MCF 10A (cell line): ENCODE measurements at regions of chr5 and their contacts with region 1.

Region 1: GRCh38 chr5:91419571-91420537 is 36.7 kb upstream of the ARRDC3 start:
- DNase-seq: peak; percentile 73
- H3K4me3 Mint-ChIP-seq: no peak overlapping the region
- H3K27ac Mint-ChIP-seq: no peak overlapping the region
- H3K4me1 Mint-ChIP-seq: no peaks in the 10 kb centered on the region
- H3K27me3 Mint-ChIP-seq: no peaks in the 10 kb centered on the region
- CTCF ChIP-seq: peak; percentile 75

Region 2: GRCh38 chr5:90709323-90710155 is 710.3 kb before region 1 on chr5:
- CTCF ChIA-PET with region 1: interaction called, 14 read pairs
- POLR2A ChIA-PET with region 1: no interaction called
- intact Hi-C with region 1: loop called (anchors 10 kb)
- DNase-seq: peak; percentile 57
- H3K4me3 Mint-ChIP-seq: no peak overlapping the region
- H3K27ac Mint-ChIP-seq: no peak overlapping the region
- H3K4me1 Mint-ChIP-seq: no peaks in the 10 kb centered on the region
- H3K27me3 Mint-ChIP-seq: peaks cover 81% of the 10 kb centered on the region
- CTCF ChIP-seq: peak; percentile 54

Region 3: GRCh38 chr5:90849939-90850338 is 569.9 kb before region 1 on chr5:
- CTCF ChIA-PET with region 1: interaction called, 10 read pairs
- POLR2A ChIA-PET with region 1: no interaction called
- intact Hi-C with region 1: no loop called
- DNase-seq: no peak
- H3K4me3 Mint-ChIP-seq: no peak overlapping the region
- H3K27ac Mint-ChIP-seq: no peak overlapping the region
- H3K4me1 Mint-ChIP-seq: peaks cover 1% of the 10 kb centered on the region
- H3K27me3 Mint-ChIP-seq: no peaks in the 10 kb centered on the region
- CTCF ChIP-seq: no peak

Region 4: GRCh38 chr5:91101600-91102379 is 318.1 kb before region 1 on chr5:
- CTCF ChIA-PET with region 1: interaction called, 5 read pairs
- POLR2A ChIA-PET with region 1: interaction called, 3 read pairs
- intact Hi-C with region 1: loop called (anchors 2 kb)
- DNase-seq: peak; percentile 83
- H3K4me3 Mint-ChIP-seq: no peak overlapping the region
- H3K27ac Mint-ChIP-seq: no peak overlapping the region
- H3K4me1 Mint-ChIP-seq: peaks cover 25% of the 10 kb centered on the region
- H3K27me3 Mint-ChIP-seq: no peaks in the 10 kb centered on the region
- CTCF ChIP-seq: peak; percentile 87

Region 5: DNA sequence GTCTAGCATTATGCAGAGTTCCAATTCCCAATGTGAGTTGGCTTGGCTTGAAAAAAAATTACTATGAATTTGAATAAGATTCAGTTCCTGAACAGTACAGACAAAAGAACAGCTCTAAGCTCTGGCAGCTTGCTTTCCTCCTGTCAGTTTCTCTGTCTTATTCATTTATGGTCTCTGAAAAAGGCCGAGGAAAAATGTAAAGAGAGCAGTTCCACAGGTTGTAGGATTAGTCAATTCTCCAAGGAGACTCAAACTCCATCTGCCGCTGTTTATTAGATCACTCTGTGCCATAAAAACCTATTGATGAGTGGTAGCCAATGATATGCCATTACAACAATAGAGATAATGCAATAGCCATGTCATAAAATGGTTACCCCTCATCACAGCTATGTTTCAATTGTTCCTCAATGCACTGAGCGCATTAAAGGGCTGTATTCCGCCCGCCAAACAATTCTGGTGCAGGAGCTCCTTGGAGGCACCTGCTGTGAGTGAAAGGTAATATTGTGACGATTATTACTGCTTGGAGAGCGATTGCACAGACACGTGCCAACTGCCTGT is 225.0 kb before region 1 on chr5:
- CTCF ChIA-PET with region 1: no interaction called
- POLR2A ChIA-PET with region 1: no interaction called
- intact Hi-C with region 1: no loop called
- DNase-seq: no peak
- H3K4me3 Mint-ChIP-seq: no peak overlapping the region
- H3K27ac Mint-ChIP-seq: no peak overlapping the region
- H3K4me1 Mint-ChIP-seq: peaks cover 4% of the 10 kb centered on the region
- H3K27me3 Mint-ChIP-seq: no peaks in the 10 kb centered on the region
- CTCF ChIP-seq: no peak

Region 6: DNA sequence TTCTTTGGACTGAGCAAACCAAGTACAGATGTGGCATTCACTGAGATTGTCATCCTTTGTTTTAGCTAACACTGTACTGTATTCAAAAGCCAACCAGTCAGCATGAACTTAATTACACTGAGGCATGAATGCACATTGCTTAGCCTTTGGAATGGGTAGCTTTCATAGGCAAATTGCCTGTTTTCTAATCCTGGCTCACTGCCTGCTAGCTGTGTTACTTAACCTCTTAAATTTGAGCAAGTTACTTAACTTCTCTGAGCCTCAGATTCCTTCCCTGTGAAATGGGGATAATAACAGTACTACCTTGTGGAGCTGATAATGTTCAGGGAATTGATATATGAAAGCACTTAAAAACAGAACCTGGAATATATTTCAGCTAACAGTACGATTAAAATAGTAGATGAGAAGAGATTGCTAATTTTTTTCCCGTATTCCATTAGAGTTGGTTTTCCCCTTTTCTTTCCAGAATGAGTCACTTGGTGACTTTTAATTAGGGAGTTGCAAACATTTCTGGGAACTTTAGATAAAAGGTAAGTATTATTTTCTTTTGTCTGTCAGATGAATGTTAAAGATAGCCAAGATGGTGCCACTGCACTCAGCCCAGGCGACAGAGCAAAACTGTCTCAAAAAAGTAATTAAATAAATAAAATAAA is 80.7 kb before region 1 on chr5:
- CTCF ChIA-PET with region 1: no interaction called
- POLR2A ChIA-PET with region 1: no interaction called
- intact Hi-C with region 1: no loop called
- DNase-seq: peak; percentile 48
- H3K4me3 Mint-ChIP-seq: no peak overlapping the region
- H3K27ac Mint-ChIP-seq: no peak overlapping the region
- H3K4me1 Mint-ChIP-seq: no peaks in the 10 kb centered on the region
- H3K27me3 Mint-ChIP-seq: no peaks in the 10 kb centered on the region
- CTCF ChIP-seq: no peak

Region 7: DNA sequence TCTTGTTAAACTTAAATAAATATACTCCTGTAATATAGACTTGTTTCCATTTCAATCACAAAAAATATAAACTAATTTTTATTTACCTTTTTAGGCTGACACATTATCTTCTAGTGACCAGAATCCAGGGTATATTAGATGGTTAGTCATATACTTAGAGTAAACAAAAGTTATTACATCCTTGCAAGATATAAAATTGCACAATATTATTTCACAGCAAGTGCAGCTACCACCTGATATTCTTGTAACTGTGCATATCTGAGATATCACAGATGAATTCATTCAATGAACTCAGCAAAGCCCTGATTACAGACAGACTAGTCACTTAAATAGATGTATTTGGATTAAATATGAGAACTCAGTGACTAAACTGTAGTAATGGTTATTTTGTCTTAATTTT is 11.1 kb before region 1 on chr5:
- CTCF ChIA-PET with region 1: interaction called, 62 read pairs
- POLR2A ChIA-PET with region 1: interaction called, 3 read pairs
- intact Hi-C with region 1: no loop called
- DNase-seq: peak; percentile 5
- H3K4me3 Mint-ChIP-seq: no peak overlapping the region
- H3K27ac Mint-ChIP-seq: no peak overlapping the region
- H3K4me1 Mint-ChIP-seq: no peaks in the 10 kb centered on the region
- H3K27me3 Mint-ChIP-seq: no peaks in the 10 kb centered on the region
- CTCF ChIP-seq: no peak